ENCODE measurements at regions of chr3 and their contacts with region 1.

Region 1: GRCh38 chr3:31371484-31372177 is 161.1 kb upstream of the STT3B start:
- DNase-seq: no peak
- ATAC-seq: no peak
- H3K4me3 ChIP-seq: no peak overlapping the region
- H3K27ac ChIP-seq: no peak overlapping the region
- H3K4me1 ChIP-seq: no peaks in the 10 kb centered on the region
- H3K27me3 ChIP-seq: no peaks in the 10 kb centered on the region
- CTCF ChIP-seq: no peak
- EP300 ChIP-seq: no peak
- POLR2A ChIP-seq: no peak
- RAD21 ChIP-seq: no peak

Region 2: DNA sequence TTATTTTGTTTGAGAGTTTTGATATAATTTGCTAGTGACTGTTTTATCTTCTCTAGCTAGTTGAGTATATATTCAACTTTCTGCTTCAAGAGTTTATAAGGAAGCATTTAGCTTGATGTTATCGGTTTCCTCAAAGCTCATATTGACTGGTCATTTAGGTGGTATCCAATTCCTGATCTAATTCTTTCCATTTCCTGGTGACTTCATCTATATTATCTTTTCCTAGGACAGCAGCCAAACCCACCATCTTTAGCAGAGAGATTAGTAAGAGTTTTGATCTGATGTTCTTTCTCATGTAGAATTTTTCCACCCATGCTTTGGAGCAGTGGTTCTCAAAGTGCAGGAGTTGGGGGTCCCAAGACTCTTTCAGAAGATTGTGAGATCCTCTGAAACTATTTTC is 12.5 kb after region 1 on chr3:
- CTCF ChIA-PET with region 1: interaction called, 26 read pairs
- POLR2A ChIA-PET with region 1: no interaction called
- RAD21 ChIA-PET with region 1: no interaction called
- SMC1A ChIA-PET with region 1: interaction called, 12 read pairs
- in situ Hi-C with region 1: no loop called
- intact Hi-C with region 1: no loop called
- DNase-seq: no peak
- ATAC-seq: no peak
- H3K4me3 ChIP-seq: no peak overlapping the region
- H3K27ac ChIP-seq: no peak overlapping the region
- H3K4me1 ChIP-seq: peaks cover 4% of the 10 kb centered on the region
- H3K27me3 ChIP-seq: no peaks in the 10 kb centered on the region
- CTCF ChIP-seq: no peak
- EP300 ChIP-seq: no peak
- POLR2A ChIP-seq: no peak
- RAD21 ChIP-seq: no peak

Region 3: GRCh38 chr3:31485196-31485595 is 113.6 kb after region 1 on chr3:
- CTCF ChIA-PET with region 1: no interaction called
- POLR2A ChIA-PET with region 1: no interaction called
- RAD21 ChIA-PET with region 1: no interaction called
- SMC1A ChIA-PET with region 1: no interaction called
- in situ Hi-C with region 1: no loop called
- intact Hi-C with region 1: no loop called
- DNase-seq: no peak
- ATAC-seq: no peak
- H3K4me3 ChIP-seq: no peak overlapping the region
- H3K27ac ChIP-seq: no peak overlapping the region
- H3K4me1 ChIP-seq: no peaks in the 10 kb centered on the region
- H3K27me3 ChIP-seq: no peaks in the 10 kb centered on the region
- CTCF ChIP-seq: no peak
- EP300 ChIP-seq: no peak
- POLR2A ChIP-seq: no peak
- RAD21 ChIP-seq: no peak

Measured in GM12878 (cell line).